ENCODE measurements at regions of chr18 and their contacts with region 1.

Region 1: GRCh38 chr18:27797484-27797883 is 379.4 kb downstream of the CDH2 start:
- DNase-seq: peak; percentile 12
- ATAC-seq: peak; percentile 52
- H3K4me3 ChIP-seq: no peak overlapping the region
- H3K27ac ChIP-seq: no peak overlapping the region
- H3K4me1 ChIP-seq: no peaks in the 10 kb centered on the region
- H3K27me3 ChIP-seq: no peaks in the 10 kb centered on the region
- CTCF ChIP-seq: no peak
- EP300 ChIP-seq: no peak
- POLR2A ChIP-seq: no peak
- RAD21 ChIP-seq: no peak

Region 2: DNA sequence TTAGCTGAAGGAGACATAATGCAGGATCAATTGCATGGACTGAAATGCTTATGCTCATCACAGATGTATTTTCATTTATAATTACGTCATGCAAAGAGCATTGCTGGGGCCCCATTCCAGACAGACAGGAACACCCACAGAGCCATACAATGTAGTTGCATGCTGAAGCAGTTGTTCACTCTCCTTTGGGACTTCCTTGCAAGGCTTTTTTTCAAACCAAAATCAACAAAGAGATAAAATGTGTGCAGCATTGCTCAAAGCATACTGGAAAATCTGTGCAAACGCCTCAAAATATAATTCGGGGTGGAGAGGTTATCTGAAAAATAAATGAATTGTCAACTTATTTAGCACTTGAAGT is 83.8 kb before region 1 on chr18:
- CTCF ChIA-PET with region 1: no interaction called
- POLR2A ChIA-PET with region 1: no interaction called
- RAD21 ChIA-PET with region 1: no interaction called
- SMC1A ChIA-PET with region 1: no interaction called
- in situ Hi-C with region 1: no loop called
- intact Hi-C with region 1: loop called (anchors 10 kb)
- DNase-seq: no peak
- ATAC-seq: no peak
- H3K4me3 ChIP-seq: no peak overlapping the region
- H3K27ac ChIP-seq: no peak overlapping the region
- H3K4me1 ChIP-seq: no peaks in the 10 kb centered on the region
- H3K27me3 ChIP-seq: no peaks in the 10 kb centered on the region
- CTCF ChIP-seq: no peak
- EP300 ChIP-seq: no peak
- POLR2A ChIP-seq: no peak
- RAD21 ChIP-seq: no peak

Measured in GM12878 (cell line).